Astrocyte of the cerebellum (primary cell): ENCODE measurements at regions of chr15 and their contacts with region 1.

Region 1: DNA sequence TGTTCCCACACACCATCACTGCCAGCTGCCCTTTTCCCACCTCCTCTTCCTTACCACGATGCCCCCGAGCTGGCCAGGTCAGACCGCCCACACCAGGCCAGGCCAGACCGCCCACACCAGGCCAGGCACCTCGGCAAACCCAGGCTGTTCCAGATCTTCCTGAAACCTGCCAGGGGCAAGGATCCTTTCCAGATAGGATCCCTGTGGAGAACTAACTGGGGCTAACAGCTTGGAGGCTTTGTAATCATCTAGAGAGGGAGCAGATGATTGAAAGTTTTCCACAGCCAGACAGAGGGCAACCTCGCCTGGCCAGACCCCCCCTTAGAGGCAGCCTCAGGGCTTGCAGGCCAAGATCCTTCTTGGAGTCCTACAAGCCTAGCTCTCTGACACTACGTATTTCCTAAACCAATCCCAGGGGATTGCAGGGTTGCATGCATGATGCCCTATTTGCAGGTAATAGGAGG is 287.4 kb upstream of the TLE3 start:
- DNase-seq: no peak
- H3K4me3 ChIP-seq: no peak overlapping the region
- CTCF ChIP-seq: no peak

Region 2: DNA sequence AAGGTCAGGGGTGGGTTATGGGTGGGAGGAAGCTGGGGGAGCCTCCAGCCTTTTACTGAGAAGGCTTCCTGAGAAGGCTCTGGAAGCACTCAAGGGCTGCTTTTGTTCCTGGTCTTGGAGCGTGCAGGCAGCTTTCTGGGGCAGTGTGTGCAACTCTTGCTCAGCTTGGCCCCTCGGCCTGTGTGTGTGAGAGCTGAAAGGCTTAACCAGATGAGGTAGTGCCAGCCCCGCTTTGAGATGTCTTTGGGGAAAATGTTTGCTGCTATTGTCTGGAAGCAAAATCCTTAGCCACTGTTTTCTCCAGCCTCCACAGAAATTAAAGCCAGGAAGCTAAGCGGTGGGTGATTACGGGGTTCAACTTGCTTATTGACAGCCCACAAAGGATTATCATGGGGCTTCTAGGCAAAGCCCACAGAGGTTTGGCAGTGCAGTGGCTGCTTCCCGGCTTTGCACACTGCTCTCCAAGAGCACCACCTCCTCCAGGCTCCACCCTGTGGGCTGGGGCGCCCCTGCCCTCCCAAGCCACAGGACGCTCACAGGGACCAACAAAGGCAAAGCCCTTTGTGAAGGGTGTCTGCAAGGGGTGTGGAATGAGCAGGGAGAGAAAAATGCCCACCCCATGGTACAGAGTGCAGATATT is 165.7 kb before region 1 on chr15:
- in situ Hi-C with region 1: no loop called
- DNase-seq: no peak
- H3K4me3 ChIP-seq: no peak overlapping the region
- CTCF ChIP-seq: no peak

Region 3: GRCh38 chr15:70299931-70300869 is 84.9 kb before region 1 on chr15:
- in situ Hi-C with region 1: no loop called
- DNase-seq: no peak
- H3K4me3 ChIP-seq: no peak overlapping the region
- CTCF ChIP-seq: no peak

Region 4: GRCh38 chr15:70318594-70319465 is 66.3 kb before region 1 on chr15:
- in situ Hi-C with region 1: no loop called
- DNase-seq: no peak
- H3K4me3 ChIP-seq: no peak overlapping the region
- CTCF ChIP-seq: no peak

Region 5: DNA sequence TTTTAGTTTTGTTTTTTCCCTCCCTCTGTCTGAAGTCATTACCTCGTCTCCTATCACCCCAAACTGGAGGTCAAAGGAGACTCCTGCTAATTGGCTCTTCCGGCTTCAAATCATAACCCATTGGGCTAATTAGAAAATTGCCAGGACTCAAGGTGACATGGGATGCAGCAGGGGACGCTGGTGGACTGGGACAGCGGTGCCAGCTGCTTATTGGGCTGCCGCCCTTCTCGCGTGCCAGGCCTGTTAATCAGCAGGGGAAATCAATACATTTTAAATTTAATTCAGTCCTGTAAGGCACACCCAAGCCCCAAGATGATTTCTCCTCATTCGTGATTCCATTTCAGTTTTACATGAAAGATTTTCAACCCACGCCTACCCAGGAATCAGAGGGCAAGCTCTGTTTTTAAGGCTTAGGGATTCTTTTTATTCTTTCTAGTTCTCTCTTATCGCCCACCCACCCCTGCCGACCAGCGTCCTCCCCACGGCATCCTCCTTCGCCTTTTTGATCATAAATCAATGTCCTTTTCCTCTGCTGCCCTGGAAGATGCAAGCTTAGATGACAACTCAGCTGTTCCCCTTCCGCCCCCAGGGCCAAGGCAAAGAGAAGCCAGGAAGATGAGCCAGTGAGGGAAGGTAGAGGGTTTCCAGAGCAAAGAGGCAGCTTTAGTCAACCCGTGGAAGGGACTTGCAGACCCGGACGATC is 48.6 kb after region 1 on chr15:
- in situ Hi-C with region 1: loop called (anchors 5 kb)
- DNase-seq: no peak
- H3K4me3 ChIP-seq: no peak overlapping the region
- CTCF ChIP-seq: no peak